Posterior cingulate gyrus (tissue), 11 donors: ENCODE measurements at regions of chrX and their contacts with region 1.

Region 1: GRCh38 chrX:141278302-141278701 is 36.0 kb upstream of the SPANXC start:
- DNase-seq: peak in 3 of 10 donors; percentile 3 to 22 (median 12)

Region 2: GRCh38 chrX:140177821-140178220 is 1100.5 kb before region 1 on chrX:
- intact Hi-C with region 1: no loop called
- DNase-seq: no peak

Region 3: DNA sequence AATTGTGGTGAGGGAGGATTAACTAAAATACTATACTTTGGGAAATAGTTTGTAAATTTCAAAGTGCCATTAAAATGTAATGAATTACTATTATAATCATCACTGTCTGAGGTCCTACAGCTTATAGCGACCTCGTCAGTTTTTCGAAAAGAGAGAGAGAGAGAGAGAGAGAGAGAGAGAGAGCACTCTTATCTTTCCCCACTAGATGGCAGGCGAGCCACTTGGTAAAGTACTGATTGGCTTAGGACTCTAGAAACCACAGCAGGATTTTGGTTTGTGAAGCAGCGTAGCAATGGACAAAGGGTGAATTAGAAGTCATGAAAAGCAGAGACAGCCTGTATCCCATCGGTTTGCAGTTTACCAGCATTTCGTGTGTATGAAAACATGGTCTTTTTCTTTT is 516.2 kb before region 1 on chrX:
- intact Hi-C with region 1: loop called (anchors 10 kb)
- DNase-seq: peak in 4 of 10 donors; percentile 20 to 41 (median 30)

Region 4: DNA sequence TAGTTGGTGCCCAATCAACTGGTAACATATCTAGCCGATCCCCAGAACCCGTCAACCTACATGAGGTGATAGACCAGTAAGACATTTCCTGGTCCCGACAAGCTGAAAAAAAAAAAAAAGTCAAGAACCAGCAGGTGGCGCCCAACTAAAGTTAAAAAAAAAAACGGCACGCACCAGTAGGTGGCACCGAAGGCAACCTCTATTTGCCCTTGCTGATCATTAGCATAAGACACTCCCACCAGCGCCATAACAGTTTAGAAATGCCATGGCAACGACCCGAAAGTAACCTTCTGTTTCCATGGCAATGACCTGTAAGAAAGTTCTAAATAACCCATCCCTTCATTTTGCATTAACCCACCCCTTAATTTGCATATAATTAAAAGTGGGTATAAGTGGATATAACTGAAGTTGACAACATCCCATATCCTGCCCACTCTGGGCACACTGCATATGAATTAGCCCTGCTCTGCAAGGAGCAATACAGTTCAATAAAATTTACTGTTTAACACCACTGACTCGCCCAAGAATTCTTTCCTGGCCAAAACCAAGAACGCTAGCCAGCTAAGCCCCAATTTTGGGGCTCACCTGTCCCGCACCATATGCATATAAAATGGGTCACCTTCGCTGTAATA is 359.8 kb before region 1 on chrX:
- intact Hi-C with region 1: loop called (anchors 5 kb)
- DNase-seq: peak in 1 of 10 donors; percentile 6